Breast epithelium (tissue), 4 donors: ENCODE measurements at regions of chr14 and their contacts with region 1.

Region 1: DNA sequence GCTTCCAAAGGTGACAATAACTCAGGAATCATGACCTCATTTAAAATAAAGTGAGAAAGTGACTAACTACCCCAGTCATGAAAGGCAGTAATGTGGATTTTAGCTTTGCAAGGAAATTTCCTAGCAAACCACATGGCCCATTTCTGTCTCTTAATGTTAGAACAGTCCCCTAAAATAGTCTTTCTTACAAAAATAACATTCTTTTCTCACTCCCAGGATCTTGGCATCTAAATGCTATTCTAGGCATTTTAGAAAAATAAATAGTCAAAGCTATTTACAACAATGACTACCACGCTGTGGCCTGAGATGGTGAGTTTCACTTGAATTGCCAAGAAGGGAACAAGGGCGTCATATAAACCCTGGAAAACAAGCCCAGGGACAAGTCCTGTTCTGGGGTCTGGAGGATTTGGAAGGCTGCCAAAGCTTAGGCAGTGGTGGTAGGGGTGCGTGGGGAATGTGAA is 101.2 kb upstream of the CCDC175 start:
- DNase-seq: no peak
- H3K4me3 ChIP-seq: no peak overlapping the region
- H3K27ac ChIP-seq: no peak overlapping the region
- H3K4me1 ChIP-seq: no peaks in the 10 kb centered on the region
- H3K27me3 ChIP-seq: no peaks in the 10 kb centered on the region
- CTCF ChIP-seq: no peak
- POLR2A ChIP-seq: no peak

Region 2: DNA sequence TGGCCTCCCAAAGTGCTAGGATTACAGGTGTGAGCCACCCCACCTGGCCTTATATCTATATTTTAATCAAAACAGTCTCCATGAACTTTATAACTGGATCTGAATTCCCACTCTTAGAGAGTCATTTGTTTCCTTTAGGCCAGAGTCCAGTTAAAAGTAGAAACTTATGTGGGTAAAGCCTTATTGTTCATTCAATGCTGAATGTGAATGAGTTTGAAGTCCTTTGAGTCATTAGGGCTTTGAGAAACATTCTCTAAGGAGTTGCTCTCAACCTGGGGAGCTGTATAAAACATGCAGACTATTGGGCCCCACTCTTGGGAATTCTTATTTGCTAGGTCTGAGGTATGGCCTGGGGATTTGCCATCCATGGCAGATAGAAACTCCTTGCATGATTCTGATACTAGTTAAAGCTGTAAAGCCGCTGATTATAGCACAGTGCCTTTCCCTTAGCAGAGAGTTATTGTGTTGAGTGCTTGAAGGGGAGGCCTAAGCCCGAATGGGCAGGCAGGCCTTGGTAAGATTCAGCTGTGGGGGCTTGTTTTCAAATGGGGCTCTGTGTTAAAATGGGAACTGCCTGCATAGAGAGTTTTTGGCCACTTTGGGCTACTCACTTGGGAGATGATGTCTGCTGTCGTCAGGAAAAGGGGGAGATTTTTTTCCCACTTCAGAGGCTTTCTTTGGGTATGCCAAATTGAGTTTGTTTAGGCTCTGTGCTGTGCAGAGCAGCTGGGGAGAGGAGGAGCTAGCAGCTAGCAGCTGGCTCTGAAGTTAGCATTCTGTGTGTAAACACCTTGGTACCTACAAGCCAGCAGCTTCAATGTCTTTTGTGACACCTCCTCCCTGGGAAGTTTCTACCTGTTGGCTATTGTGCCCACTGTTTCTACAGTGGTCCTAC is 922.5 kb before region 1 on chr14:
- intact Hi-C with region 1: loop called (anchors 5 kb)
- DNase-seq: no peak
- H3K4me3 ChIP-seq: no peak overlapping the region
- H3K27ac ChIP-seq: peak overlapping the region; percentile 22 to 34
- H3K4me1 ChIP-seq: peaks cover 0 to 10% of the 10 kb centered on the region in 2 donors
- H3K27me3 ChIP-seq: no peaks in the 10 kb centered on the region
- CTCF ChIP-seq: no peak
- POLR2A ChIP-seq: no peak